Ascending aorta (tissue), 2 donors: ENCODE measurements at regions of chr2 and their contacts with region 1.

Region 1: DNA sequence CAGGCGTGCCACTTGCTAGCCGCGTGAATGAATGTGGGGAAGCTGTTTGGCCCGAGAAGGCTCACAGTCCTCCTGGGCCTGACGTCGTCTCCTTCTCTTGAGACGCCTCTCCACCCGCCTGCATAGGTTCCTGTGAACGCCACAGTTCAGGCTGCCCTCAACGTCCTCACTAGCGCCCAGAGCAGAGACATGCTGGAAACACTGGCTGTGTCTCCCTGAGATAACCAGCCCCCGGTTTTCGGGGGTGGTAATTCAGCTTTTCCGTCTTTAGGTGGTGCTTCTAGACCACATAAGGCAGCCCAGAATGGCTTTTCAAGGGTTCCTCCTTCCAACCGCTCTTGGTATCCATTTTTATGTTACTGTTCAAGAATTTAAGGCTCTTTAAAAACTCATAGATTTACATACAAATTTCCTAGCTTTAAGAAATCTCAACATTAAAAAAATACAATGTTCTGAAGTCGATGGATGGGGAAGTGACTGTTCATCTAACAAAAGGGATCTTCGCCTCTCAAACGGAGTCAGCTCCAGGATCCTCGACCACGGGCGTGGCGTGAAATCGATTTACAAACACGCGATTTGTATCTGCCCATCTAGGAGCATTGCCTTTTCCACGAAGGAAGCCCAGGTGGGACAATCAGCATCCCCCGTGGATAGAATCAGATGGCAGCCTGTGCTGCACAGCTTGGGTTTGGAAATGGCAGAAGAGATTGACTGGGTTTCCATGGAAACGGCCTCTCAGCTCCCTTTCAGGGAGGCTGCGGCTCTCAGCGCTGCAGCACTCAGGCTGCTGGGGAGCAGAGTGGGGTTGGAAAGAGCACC is 110.6 kb upstream of the PXDN start:
- DNase-seq: peak in 1 of 2 donors; percentile 60
- H3K4me3 ChIP-seq: peak overlapping the region; percentile 8 to 44
- H3K27ac ChIP-seq: no peak overlapping the region
- H3K4me1 ChIP-seq: peaks cover 0 to 5% of the 10 kb centered on the region in 2 donors
- H3K27me3 ChIP-seq: no peaks in the 10 kb centered on the region
- CTCF ChIP-seq: peak; percentile 49 to 82 (median 67)

Region 2: GRCh38 chr2:1721706-1722646 is 133.0 kb before region 1 on chr2:
- intact Hi-C with region 1: no loop called
- DNase-seq: peak in 1 of 2 donors; percentile 70
- H3K4me3 ChIP-seq: no peak overlapping the region
- H3K27ac ChIP-seq: peak overlapping the region; percentile 84
- H3K4me1 ChIP-seq: peaks cover 9 to 25% of the 10 kb centered on the region in 2 donors
- H3K27me3 ChIP-seq: no peaks in the 10 kb centered on the region
- CTCF ChIP-seq: no peak

Region 3: GRCh38 chr2:2271469-2271941 is 416.6 kb after region 1 on chr2:
- intact Hi-C with region 1: loop called (anchors 10 kb)
- DNase-seq: peak; percentile 19 to 67
- H3K4me3 ChIP-seq: no peak overlapping the region
- H3K27ac ChIP-seq: peak overlapping the region; percentile 67
- H3K4me1 ChIP-seq: peaks cover 0 to 11% of the 10 kb centered on the region in 2 donors
- H3K27me3 ChIP-seq: no peaks in the 10 kb centered on the region
- CTCF ChIP-seq: no peak

Region 4: DNA sequence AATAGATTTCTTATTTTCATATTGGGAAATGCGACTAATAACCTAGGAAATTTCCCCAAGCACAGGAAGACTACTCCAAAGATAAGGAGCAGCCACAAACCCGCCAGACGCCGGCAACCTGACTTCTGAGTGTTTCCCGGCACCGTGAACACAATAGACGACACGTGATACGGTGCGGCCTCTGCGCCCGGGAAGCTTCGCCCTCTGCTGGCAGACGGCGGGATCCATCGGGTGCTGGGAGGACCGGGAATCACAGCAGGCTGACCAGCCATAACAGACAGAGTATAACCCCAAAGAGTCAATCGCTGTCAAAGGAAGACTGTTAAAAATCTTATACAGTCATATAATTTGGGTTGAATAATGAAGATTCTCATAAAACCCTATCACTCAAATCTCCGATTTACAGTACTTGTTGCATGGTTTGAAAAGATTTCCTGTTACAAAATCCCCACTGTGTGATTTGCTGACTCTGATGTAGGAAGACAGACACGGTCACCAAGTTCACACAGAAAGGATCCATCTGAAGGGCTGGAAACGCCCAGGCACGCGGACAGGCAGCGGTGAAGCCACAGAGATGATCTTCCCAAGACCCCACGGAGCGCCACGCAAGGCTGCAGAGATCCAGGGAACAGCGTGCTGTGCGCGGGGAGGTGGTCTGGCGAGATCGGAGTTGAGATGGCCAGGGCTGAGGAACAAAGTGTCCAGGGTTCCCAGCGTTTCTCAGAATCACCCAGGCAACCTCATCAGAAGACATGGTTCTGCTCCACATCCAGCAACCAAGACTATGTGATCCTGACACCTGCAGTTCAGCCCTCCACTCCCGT is 1448.9 kb after region 1 on chr2:
- intact Hi-C with region 1: loop called (anchors 5 kb)
- DNase-seq: peak; percentile 40 to 89
- H3K4me3 ChIP-seq: peak overlapping the region; percentile 38 to 45
- H3K27ac ChIP-seq: no peak overlapping the region
- H3K4me1 ChIP-seq: no peaks in the 10 kb centered on the region
- H3K27me3 ChIP-seq: no peaks in the 10 kb centered on the region
- CTCF ChIP-seq: peak; percentile 77 to 90 (median 80)

Region 5: GRCh38 chr2:3651691-3652648 is 1797.0 kb after region 1 on chr2:
- intact Hi-C with region 1: loop called (anchors 10 kb)
- DNase-seq: no peak
- H3K4me3 ChIP-seq: peak overlapping the region; percentile 17 to 55
- H3K27ac ChIP-seq: peak overlapping the region; percentile 13 to 37
- H3K4me1 ChIP-seq: peaks cover 3 to 5% of the 10 kb centered on the region in 2 donors
- H3K27me3 ChIP-seq: no peaks in the 10 kb centered on the region
- CTCF ChIP-seq: no peak